ENCODE measurements at regions of chr1 and their contacts with region 1.

Region 1: GRCh38 chr1:100132566-100133477 is at the starts of genes SASS6 and TRMT13:
- DNase-seq: peak; percentile 97
- ATAC-seq: peak; percentile 94
- H3K4me3 ChIP-seq: peak within 1 kb of the TSS; percentile 82 to 97 (median 95)
- H3K27ac ChIP-seq: peak within 1 kb of the TSS; percentile 87
- H3K4me1 ChIP-seq: peaks cover 40% of the 10 kb centered on the region
- H3K27me3 ChIP-seq: no peaks in the 10 kb centered on the region
- CTCF ChIP-seq: 0 out of 2 replicates have a peak, but pooled peaks have one; percentile 1
- EP300 ChIP-seq: peak in 1 of 2 experiments; percentile 42; a peak in 1 of 4 replicates
- POLR2A ChIP-seq: peak in 1 of 2 experiments; percentile 62; a peak in 2 of 4 replicates
- RAD21 ChIP-seq: no peak
- total RNA-seq, gene SASS6: 10.7 and 18.0 TPM in 2 replicates
- total RNA-seq, gene TRMT13: 12.4 and 15.6 TPM in 2 replicates

Region 2: DNA sequence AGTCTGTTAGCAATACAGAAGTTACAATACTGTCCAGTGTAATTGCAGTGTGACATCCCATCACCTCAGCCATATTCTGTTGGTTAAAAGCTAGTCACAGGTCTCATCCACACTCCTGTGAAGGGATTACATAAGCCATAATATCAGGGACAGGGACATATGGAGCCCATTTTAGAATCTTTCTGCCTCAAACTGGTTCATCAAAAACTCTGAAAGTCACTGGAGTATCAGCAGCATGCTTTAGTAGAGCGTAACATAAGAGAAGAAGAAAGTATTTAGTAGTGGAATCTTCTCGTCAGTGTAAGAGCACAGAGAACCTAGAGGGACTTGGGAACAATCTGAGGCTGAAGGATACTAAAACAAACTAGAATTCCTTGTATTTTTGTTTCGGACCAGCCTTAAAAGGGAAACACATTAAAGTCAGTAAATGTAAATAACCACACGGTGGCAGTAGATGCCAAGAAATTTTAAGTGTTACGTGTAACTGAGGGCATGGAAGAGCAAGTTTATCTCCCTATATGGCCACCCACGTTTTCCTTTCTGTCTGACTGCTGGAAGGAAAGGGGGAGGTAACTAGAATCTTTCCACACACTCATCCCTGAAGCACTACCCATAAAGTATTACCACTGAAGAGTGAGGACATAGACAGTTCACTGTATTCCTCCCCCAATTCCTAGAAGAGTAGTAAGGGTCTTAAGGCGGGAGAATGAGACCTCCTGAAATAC is 324.3 kb before region 1 on chr1:
- CTCF ChIA-PET with region 1: no interaction called
- POLR2A ChIA-PET with region 1: no interaction called
- in situ Hi-C with region 1: no loop called
- intact Hi-C with region 1: loop called (anchors 1 kb)
- DNase-seq: peak; percentile 81
- ATAC-seq: peak; percentile 95
- H3K4me3 ChIP-seq: peak overlapping the region; percentile 17 to 30 (median 24); a peak in 2 of 6 replicates
- H3K27ac ChIP-seq: no peak overlapping the region
- H3K4me1 ChIP-seq: peaks cover 13% of the 10 kb centered on the region; the same call in 1 of the 2 replicates
- H3K27me3 ChIP-seq: no peaks in the 10 kb centered on the region
- CTCF ChIP-seq: peak; percentile 85
- EP300 ChIP-seq: no peak
- POLR2A ChIP-seq: no peak
- RAD21 ChIP-seq: peak; percentile 81

Region 3: DNA sequence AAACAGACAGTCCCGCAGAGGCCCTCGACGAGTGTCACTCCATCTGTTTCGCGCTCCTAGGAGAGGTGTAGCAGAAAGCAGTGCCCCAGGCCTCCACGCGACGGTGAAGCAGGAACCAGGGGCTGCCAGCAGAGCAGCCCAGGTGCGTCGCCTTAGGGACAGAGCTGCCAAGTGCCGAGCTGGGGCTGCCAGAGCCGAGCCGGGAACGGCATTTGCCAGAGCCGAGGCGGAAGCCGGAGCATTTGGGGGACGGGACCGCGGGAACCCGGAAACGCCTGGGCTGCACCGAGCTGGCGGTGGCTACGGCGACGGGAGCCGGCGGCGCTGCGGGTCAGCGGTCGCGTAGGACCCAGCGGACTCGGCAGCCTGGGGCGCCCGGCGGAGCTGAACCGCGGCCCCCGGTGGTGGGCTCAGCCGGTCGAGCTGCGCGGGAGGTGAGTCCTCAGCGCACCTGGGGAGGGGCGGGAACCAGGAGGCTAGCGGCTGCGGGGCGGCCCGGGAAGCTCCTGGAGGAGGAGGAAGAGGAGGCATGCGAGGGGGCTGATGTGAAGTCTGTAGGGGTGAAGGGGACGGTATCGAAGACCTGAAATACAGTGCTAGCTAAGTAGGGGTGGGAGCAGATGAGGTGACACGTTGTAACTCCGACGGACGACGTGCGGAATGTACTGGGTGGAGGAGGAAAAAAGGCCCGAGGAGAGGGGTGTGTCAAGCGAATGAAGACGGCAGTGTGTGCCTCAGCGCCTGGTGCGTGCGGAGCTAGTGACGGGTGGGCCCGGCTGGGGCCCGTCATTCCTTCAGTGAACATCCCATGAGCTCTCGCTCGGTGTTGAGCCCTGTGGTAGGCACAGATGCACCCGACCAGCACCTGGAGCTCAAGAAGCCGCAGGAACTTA is 162.8 kb before region 1 on chr1 and contains the start of gene SLC35A3:
- CTCF ChIA-PET with region 1: no interaction called
- POLR2A ChIA-PET with region 1: interaction called, 10 read pairs
- in situ Hi-C with region 1: no loop called
- intact Hi-C with region 1: loop called (anchors 10 kb)
- DNase-seq: peak; percentile 74
- ATAC-seq: peak; percentile 97
- H3K4me3 ChIP-seq: peak within 1 kb of the TSS; percentile 79 to 97 (median 95)
- H3K27ac ChIP-seq: peak within 1 kb of the TSS; percentile 86
- H3K4me1 ChIP-seq: peaks cover 28% of the 10 kb centered on the region; the same call in 1 of the 2 replicates
- H3K27me3 ChIP-seq: no peaks in the 10 kb centered on the region; a peak in 1 of 5 replicates
- CTCF ChIP-seq: peak; percentile 50
- EP300 ChIP-seq: peak in 1 of 2 experiments; percentile 29; a peak in 1 of 4 replicates
- POLR2A ChIP-seq: peak; percentile 72 to 75; a peak in 3 of 4 replicates
- RAD21 ChIP-seq: peak; percentile 63
- total RNA-seq, gene SLC35A3: 19.2 and 24.9 TPM in 2 replicates

Region 4: GRCh38 chr1:100037927-100038659 is 94.7 kb before region 1 on chr1:
- CTCF ChIA-PET with region 1: no interaction called
- POLR2A ChIA-PET with region 1: no interaction called
- in situ Hi-C with region 1: no loop called
- intact Hi-C with region 1: loop called (anchors 2 kb)
- DNase-seq: peak; percentile 57
- ATAC-seq: peak; percentile 93
- H3K4me3 ChIP-seq: peak overlapping the region; percentile 91 to 99 (median 97)
- H3K27ac ChIP-seq: peak overlapping the region; percentile 94
- H3K4me1 ChIP-seq: peaks cover 58% of the 10 kb centered on the region
- H3K27me3 ChIP-seq: no peaks in the 10 kb centered on the region; a peak in 1 of 5 replicates
- CTCF ChIP-seq: no peak
- EP300 ChIP-seq: peak in 1 of 2 experiments; percentile 6; a peak in 1 of 4 replicates
- POLR2A ChIP-seq: peak; percentile 94 to 97
- RAD21 ChIP-seq: 0 out of 2 replicates have a peak, but pooled peaks have one; percentile 13

Region 5: DNA sequence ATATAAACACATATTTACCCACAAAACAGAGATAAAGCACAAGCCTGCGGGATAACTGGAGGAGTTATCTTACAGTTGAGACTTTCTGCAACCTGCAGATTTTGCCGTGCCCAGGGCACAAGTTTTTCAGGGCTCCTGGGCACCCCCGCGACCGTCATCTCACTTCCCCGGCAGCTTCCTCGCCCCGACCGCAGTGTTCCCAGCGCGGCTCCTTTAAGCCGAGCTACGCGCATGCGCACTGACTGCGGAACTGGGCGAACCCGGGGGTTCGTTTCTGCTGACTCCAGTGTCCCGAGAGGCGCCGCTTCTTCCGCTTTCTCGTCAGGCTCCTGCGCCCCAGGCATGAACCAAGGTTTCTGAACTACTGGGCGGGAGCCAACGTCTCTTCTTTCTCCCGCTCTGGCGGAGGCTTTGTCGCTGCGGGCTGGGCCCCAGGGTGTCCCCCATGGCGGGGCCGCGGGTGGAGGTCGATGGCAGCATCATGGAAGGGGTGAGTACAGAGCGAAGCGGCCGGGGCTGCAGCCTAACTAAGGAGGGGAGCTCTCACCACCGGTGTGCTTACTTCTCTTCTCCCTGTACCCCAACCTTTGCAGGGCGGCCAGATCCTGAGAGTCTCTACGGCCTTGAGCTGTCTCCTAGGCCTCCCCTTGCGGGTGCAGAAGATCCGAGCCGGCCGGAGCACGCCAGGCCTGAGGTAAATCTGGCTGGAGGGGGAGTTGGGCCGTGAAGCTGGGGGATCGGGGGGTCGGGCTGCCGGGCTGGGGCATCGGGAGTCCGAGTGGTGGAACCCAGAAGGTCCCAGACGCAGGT is 133.3 kb after region 1 on chr1 and contains the start of gene RTCA:
- CTCF ChIA-PET with region 1: no interaction called
- POLR2A ChIA-PET with region 1: interaction called, 5 read pairs
- in situ Hi-C with region 1: no loop called
- intact Hi-C with region 1: loop called (anchors 5 kb)
- DNase-seq: peak; percentile 90
- ATAC-seq: peak; percentile 97
- H3K4me3 ChIP-seq: peak within 1 kb of the TSS; percentile 94 to 99 (median 98)
- H3K27ac ChIP-seq: peak within 1 kb of the TSS; percentile 89
- H3K4me1 ChIP-seq: peaks cover 39% of the 10 kb centered on the region
- H3K27me3 ChIP-seq: no peaks in the 10 kb centered on the region; a peak in 1 of 5 replicates
- CTCF ChIP-seq: no peak
- EP300 ChIP-seq: no peak
- POLR2A ChIP-seq: peak; percentile 81 to 84
- RAD21 ChIP-seq: no peak
- total RNA-seq, gene RTCA: 31.0 and 37.7 TPM in 2 replicates